ENCODE measurements at regions of chr19 and their contacts with region 1.

Region 1: GRCh38 chr19:33778089-33778791 is 18.4 kb upstream of the KCTD15 start:
- H3K4me3 Mint-ChIP-seq: peak overlapping the region; percentile 30
- H3K27ac Mint-ChIP-seq: no peak overlapping the region
- H3K4me1 Mint-ChIP-seq: peaks cover 7% of the 10 kb centered on the region
- H3K27me3 Mint-ChIP-seq: peaks cover 24% of the 10 kb centered on the region

Region 2: DNA sequence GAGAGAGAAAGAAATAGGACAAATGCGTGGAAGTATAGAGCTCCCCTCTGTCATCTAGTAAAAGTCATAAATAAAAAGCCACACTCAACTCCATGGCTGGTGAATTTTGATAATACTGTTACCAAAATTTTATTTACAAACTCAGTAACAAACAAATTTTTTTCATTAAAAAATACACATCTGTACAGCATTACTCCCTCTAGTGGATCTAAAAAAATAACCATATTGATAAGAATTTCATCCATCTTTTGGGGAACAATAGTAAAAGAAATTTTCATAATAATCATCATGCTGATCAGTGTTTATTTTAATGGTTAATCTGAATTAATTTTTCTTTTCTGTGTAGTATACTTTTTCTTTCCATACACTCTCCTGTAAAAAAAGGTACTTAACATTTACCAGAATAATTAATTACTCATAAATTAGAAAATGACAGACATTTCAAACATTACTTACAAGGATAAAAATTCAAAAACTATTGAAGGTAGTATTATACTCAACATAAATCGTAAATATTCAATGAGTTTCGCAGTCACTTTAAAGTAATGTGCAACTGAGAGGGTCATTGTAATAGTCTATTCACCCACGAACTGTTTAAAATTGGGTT is 220.6 kb after region 1 on chr19:
- intact Hi-C with region 1: loop called (anchors 5 kb)
- H3K4me3 Mint-ChIP-seq: no peak overlapping the region
- H3K27ac Mint-ChIP-seq: no peak overlapping the region
- H3K4me1 Mint-ChIP-seq: no peaks in the 10 kb centered on the region
- H3K27me3 Mint-ChIP-seq: peaks cover 1% of the 10 kb centered on the region

Region 3: GRCh38 chr19:34096020-34096915 is 318.0 kb after region 1 on chr19:
- intact Hi-C with region 1: loop called (anchors 1 kb)
- H3K4me3 Mint-ChIP-seq: no peak overlapping the region
- H3K27ac Mint-ChIP-seq: no peak overlapping the region
- H3K4me1 Mint-ChIP-seq: no peaks in the 10 kb centered on the region
- H3K27me3 Mint-ChIP-seq: peaks cover 7% of the 10 kb centered on the region

Region 4: GRCh38 chr19:34145741-34146202 is 367.5 kb after region 1 on chr19:
- intact Hi-C with region 1: loop called (anchors 5 kb)
- H3K4me3 Mint-ChIP-seq: no peak overlapping the region
- H3K27ac Mint-ChIP-seq: no peak overlapping the region
- H3K4me1 Mint-ChIP-seq: no peaks in the 10 kb centered on the region
- H3K27me3 Mint-ChIP-seq: peaks cover 1% of the 10 kb centered on the region

Measured in dendritic cell treated with granulocyte-macrophage colony-stimulating factor and Interleukin-4, amounts not matched to agents 40 ng/mL and 50 ng/mL, for 4 days (primary cell).